Psoas muscle (tissue), 8 donors: ENCODE measurements at regions of chr11 and their contacts with region 1.

Region 1: DNA sequence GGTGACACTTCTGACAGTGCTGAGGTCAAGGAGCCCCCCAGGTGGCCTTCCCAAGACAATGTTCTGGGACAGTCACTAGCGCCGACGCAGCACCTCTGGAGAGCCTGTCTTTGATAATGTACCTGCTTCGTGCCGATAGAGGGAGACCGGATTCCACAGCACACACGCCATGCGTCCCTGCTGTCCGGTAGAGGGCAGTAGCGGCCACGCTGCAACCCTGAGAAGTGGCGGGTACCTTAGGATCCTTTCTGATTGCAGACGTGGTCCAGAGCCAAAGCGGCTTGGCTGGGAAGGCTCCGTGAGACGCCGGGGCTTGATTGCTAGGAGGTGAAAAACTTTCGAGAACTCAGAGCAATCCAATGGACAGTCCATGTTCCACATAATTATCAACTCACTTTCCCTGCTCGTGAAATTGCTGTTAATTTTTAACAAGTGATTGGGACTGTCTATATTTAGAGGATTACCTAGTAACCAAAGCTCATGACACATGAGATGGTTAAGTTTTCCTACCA is 11.4 kb upstream of the BARX2 start:
- DNase-seq: peak; percentile 82 to 84
- ATAC-seq: peak; percentile 88 to 99 (median 93)
- H3K4me3 ChIP-seq: peak overlapping the region; percentile 35
- H3K27ac ChIP-seq: no peak overlapping the region
- H3K4me1 ChIP-seq: no peaks in the 10 kb centered on the region
- H3K27me3 ChIP-seq: peaks cover 2 to 50% (median 11%) of the 10 kb centered on the region in 3 donors
- CTCF ChIP-seq: peak; percentile 87

Region 2: GRCh38 chr11:129743111-129743815 is 379.1 kb after region 1 on chr11:
- intact Hi-C with region 1: loop called in 1 of 2 experiments (anchors 10 kb)
- DNase-seq: no peak
- ATAC-seq: no peak
- H3K4me3 ChIP-seq: peak overlapping the region; percentile 28
- H3K27ac ChIP-seq: no peak overlapping the region
- H3K4me1 ChIP-seq: no peaks in the 10 kb centered on the region
- H3K27me3 ChIP-seq: peaks cover 2 to 26% (median 6%) of the 10 kb centered on the region in 3 donors
- CTCF ChIP-seq: no peak

Region 3: GRCh38 chr11:129750349-129751292 is 386.4 kb after region 1 on chr11:
- intact Hi-C with region 1: loop called (anchors 1 to 10 kb)
- DNase-seq: peak; percentile 73 to 82
- ATAC-seq: peak; percentile 85 to 92 (median 88)
- H3K4me3 ChIP-seq: peak overlapping the region; percentile 40
- H3K27ac ChIP-seq: no peak overlapping the region
- H3K4me1 ChIP-seq: no peaks in the 10 kb centered on the region
- H3K27me3 ChIP-seq: peaks cover 0 to 12% (median 3%) of the 10 kb centered on the region in 3 donors
- CTCF ChIP-seq: peak; percentile 98